ENCODE measurements at regions of chr22 and their contacts with region 1.

Region 1: GRCh38 chr22:39643311-39644083 is 72.9 kb downstream of the CACNA1I start:
- DNase-seq: no peak
- ATAC-seq: no peak
- H3K4me3 ChIP-seq: no peak overlapping the region
- H3K4me3 Mint-ChIP-seq: no peak overlapping the region
- H3K27ac ChIP-seq: no peak overlapping the region
- H3K27ac Mint-ChIP-seq: no peak overlapping the region
- H3K4me1 ChIP-seq: no peaks in the 10 kb centered on the region
- H3K4me1 Mint-ChIP-seq: no peaks in the 10 kb centered on the region
- H3K27me3 ChIP-seq: peaks cover 0 to 4% of the 10 kb centered on the region in 2 experiments
- H3K27me3 Mint-ChIP-seq: no peaks in the 10 kb centered on the region
- CTCF ChIP-seq: no peak

Region 2: DNA sequence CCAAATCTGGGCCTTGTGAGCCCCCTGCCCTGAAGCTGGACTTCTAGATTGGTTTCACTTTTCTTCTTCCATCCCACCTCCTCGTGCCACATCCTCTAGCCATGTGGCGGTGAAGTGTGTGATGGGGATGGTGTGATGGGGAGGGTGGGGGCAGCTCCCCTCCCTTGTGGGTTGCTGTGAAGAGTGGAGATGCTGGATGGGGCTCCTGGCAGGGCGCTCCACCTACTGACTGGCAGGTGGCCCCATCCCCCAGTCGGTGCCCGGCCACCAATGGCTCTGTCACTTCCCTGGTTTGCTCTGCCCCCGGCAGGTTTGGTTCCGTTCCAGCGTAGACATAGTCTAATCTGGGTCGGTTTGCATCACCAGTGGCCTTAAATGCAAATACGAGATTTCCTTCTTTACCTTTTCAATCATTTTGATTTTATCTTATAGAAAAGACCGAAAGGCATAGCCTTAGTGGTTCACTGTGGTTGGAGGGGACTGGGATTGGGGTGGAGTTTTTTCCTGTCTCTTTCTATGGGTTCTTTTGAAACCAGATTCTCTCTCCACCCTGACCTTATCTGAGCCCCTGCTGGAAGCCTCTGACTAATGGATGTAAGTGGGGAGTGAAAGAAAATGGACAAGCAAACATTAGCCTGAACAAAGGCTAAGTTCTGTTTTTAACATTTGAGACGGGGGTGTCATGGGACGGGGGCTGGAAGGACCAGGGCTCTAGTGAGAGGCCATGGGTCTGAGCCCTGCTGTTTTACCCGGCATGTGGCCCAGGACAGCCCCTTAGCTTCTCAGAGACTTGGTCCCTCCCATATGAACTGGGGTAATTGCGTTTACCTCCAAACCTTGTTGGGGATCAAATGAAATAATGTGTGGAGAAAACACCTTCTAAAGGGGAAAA is 76.3 kb after region 1 on chr22:
- CTCF ChIA-PET with region 1: no interaction called
- POLR2A ChIA-PET with region 1: no interaction called
- intact Hi-C with region 1: loop called in 1 of 2 experiments (anchors 5 kb)
- DNase-seq: peak in 1 of 14 experiments; percentile 19
- ATAC-seq: no peak
- H3K4me3 ChIP-seq: no peak overlapping the region
- H3K4me3 Mint-ChIP-seq: no peak overlapping the region
- H3K27ac ChIP-seq: no peak overlapping the region
- H3K27ac Mint-ChIP-seq: no peak overlapping the region
- H3K4me1 ChIP-seq: peaks cover 3% of the 10 kb centered on the region
- H3K4me1 Mint-ChIP-seq: no peaks in the 10 kb centered on the region
- H3K27me3 ChIP-seq: no peaks in the 10 kb centered on the region
- H3K27me3 Mint-ChIP-seq: no peaks in the 10 kb centered on the region
- CTCF ChIP-seq: no peak